GM12878 (cell line): ENCODE measurements at regions of chr11 and their contacts with region 1.

Region 1: DNA sequence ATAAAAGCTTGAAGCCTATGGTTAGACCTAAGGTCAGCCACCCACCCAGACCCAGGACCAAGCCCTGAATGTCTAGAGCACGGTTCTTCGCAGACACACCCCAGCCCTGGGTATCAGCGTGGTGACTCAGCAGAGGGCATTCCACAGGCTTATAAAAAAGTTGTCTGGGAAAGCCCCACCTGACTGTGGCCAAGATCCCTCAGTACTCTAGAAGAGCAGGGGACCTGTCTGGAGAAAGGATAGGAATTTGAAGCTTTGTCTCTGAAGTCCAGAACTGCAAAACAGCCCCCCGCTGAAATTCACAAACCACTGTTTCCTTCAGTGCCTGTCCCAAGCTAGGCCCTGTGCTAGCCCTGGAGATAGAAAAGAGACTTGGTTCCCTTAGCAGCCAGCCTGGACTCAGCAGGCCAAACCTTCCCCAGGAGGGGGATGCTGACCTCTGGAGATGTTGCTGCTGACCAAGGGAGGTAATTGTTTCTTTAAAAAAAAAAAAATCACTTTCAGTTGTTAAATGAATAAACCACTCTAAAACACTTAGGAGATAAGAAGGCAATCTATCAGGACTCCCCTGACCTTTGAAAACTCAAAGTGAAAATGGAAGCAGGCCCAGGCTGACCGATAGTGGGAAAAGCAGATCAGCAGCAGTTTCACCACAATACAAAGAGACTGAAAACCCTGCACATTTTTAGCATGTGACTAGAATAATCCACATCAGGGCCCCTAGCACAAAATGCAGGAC is 113.9 kb downstream of the ABTB2 start:
- DNase-seq: peak; percentile 86
- ATAC-seq: peak; percentile 80
- H3K4me3 ChIP-seq: no peak overlapping the region
- H3K27ac ChIP-seq: peak overlapping the region; percentile 84
- H3K4me1 ChIP-seq: peaks cover 82% of the 10 kb centered on the region
- H3K27me3 ChIP-seq: no peaks in the 10 kb centered on the region
- CTCF ChIP-seq: no peak
- EP300 ChIP-seq: peak; percentile 74 to 87
- POLR2A ChIP-seq: no peak
- RAD21 ChIP-seq: peak; percentile 29; the same call in 1 of the 2 replicates

Region 2: DNA sequence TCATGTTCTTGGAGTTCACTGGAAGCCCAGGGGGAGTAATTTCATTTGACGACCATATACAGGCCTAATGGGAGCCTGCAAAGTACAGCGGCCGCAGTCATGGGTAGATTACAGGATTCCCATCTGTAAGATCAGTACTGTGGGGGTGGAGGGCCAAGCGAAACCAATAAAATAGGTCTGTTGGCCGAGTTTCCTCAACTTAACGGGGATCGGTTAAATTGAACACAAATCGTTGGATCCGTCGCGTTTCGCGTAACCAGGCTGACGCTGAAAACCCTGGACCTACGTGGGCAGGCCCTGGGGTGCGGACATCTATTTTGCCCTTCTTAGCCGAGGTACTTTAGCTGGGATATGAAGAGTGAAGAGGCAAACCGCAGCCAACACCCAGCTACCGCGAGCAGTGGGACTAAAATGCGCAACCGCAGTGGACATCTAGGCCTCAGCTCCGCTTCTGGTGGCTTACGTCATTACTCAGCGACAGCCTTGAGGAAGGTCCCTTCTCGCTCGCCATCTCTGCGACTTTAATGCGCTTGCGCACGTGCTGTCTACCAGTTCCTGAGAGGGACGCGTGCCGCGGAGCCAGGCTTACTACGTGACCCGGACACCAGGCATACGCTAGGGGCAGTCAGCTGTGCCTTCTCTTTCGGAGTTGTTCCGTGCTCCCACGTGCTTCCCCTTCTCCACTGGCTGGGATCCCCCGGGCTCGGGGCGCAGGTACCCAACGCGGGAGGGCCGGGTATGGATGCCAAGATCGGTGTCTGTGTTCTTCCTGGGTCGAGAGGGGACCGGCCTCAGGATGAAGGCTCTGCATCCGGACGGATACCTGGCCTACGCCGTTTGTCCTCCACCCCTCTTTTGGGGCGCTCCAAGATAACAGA is 138.6 kb before region 1 on chr11 and contains the start of gene NAT10:
- CTCF ChIA-PET with region 1: no interaction called
- POLR2A ChIA-PET with region 1: no interaction called
- RAD21 ChIA-PET with region 1: no interaction called
- SMC1A ChIA-PET with region 1: interaction called, 4 read pairs
- in situ Hi-C with region 1: no loop called
- intact Hi-C with region 1: loop called (anchors 5 kb)
- DNase-seq: peak; percentile 99
- ATAC-seq: peak; percentile 94
- H3K4me3 ChIP-seq: peak within 1 kb of the TSS; percentile 95
- H3K27ac ChIP-seq: peak within 1 kb of the TSS; percentile 89
- H3K4me1 ChIP-seq: peaks cover 15% of the 10 kb centered on the region
- H3K27me3 ChIP-seq: no peaks in the 10 kb centered on the region
- CTCF ChIP-seq: 0 out of 6 replicates have a peak, but pooled peaks of 1 of the 3 experiments have one; percentile 17
- EP300 ChIP-seq: peak in 1 of 2 experiments; percentile 73; a peak in 2 of 4 replicates
- POLR2A ChIP-seq: peak; percentile 96
- RAD21 ChIP-seq: 0 out of 2 replicates have a peak, but pooled peaks have one; percentile 7
- polyA plus RNA-seq, gene NAT10: 45.1 to 72.5 TPM

Region 3: DNA sequence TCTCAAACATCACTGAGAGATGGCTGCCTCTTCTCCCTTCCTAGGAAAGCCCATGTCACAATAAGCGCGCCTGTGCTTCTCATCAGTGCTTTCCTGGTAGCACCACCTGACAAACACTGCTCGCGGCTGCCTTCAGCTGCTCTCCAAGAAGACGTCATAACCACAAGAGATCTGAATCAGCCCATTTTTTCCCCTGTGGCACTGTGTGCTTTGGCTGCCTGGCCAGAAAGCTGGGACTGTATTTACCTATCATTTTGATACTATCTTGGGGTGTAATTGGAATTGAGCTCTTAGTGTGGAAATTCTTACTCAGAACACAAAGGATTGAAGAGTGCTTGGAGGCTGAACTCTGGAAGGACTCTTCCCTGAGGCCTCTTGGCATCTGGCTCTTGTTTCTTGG is 326.7 kb after region 1 on chr11:
- CTCF ChIA-PET with region 1: no interaction called
- POLR2A ChIA-PET with region 1: no interaction called
- RAD21 ChIA-PET with region 1: no interaction called
- SMC1A ChIA-PET with region 1: no interaction called
- in situ Hi-C with region 1: no loop called
- intact Hi-C with region 1: no loop called
- DNase-seq: no peak
- ATAC-seq: no peak
- H3K4me3 ChIP-seq: no peak overlapping the region
- H3K27ac ChIP-seq: no peak overlapping the region
- H3K4me1 ChIP-seq: no peaks in the 10 kb centered on the region
- H3K27me3 ChIP-seq: no peaks in the 10 kb centered on the region; a peak in 4 of 4 replicates
- CTCF ChIP-seq: no peak
- EP300 ChIP-seq: no peak
- POLR2A ChIP-seq: no peak
- RAD21 ChIP-seq: no peak